CD4-positive, alpha-beta T cell (primary cell): ENCODE measurements at regions of chr11 and their contacts with region 1.

Region 1: GRCh38 chr11:57456960-57457642 is 3.2 kb upstream of the RTN4RL2 start:
- DNase-seq: peak; percentile 50 to 85 (median 66)
- ATAC-seq: peak; percentile 62
- H3K4me3 ChIP-seq: no peak overlapping the region
- H3K4me3 Mint-ChIP-seq: peak overlapping the region; percentile 83
- H3K27ac ChIP-seq: no peak overlapping the region
- H3K27ac Mint-ChIP-seq: no peak overlapping the region
- H3K4me1 ChIP-seq: peaks cover 42% of the 10 kb centered on the region
- H3K4me1 Mint-ChIP-seq: peaks cover 32% of the 10 kb centered on the region
- H3K27me3 ChIP-seq: peaks cover 33 to 36% of the 10 kb centered on the region in 2 experiments
- H3K27me3 Mint-ChIP-seq: peaks cover 51% of the 10 kb centered on the region
- CTCF ChIP-seq: peak; percentile 98

Region 2: DNA sequence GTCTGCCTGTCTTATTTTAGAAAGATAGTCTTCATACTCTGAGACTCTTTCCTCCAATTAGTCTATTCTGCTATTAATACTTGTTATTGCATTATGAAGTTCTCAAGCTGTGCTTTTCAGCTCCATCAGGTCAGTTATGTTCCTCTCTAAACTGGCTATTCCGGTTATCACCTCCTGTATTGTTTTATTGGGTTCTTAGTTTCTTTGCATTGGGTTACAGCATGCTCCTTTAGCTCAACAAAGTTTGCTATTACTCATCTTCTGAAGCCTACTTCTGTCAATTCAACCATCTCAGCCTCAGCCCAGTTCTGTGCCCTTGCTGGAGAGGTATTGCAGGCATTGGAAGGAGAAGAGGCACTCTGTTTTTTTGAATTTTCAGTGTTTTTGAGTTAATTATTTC is 489.4 kb before region 1 on chr11:
- CTCF ChIA-PET with region 1: no interaction called
- POLR2A ChIA-PET with region 1: no interaction called
- intact Hi-C with region 1: no loop called
- DNase-seq: no peak
- ATAC-seq: no peak
- H3K4me3 ChIP-seq: no peak overlapping the region
- H3K4me3 Mint-ChIP-seq: no peak overlapping the region
- H3K27ac ChIP-seq: no peak overlapping the region
- H3K27ac Mint-ChIP-seq: no peak overlapping the region
- H3K4me1 ChIP-seq: no peaks in the 10 kb centered on the region
- H3K4me1 Mint-ChIP-seq: no peaks in the 10 kb centered on the region
- H3K27me3 ChIP-seq: no peaks in the 10 kb centered on the region
- H3K27me3 Mint-ChIP-seq: peaks cover 5% of the 10 kb centered on the region
- CTCF ChIP-seq: no peak

Region 3: GRCh38 chr11:57116654-57117053 is 340.4 kb before region 1 on chr11:
- CTCF ChIA-PET with region 1: no interaction called
- POLR2A ChIA-PET with region 1: no interaction called
- intact Hi-C with region 1: no loop called
- DNase-seq: peak in 3 of 14 experiments; percentile 2 to 8 (median 7)
- ATAC-seq: no peak
- H3K4me3 ChIP-seq: no peak overlapping the region
- H3K4me3 Mint-ChIP-seq: no peak overlapping the region
- H3K27ac ChIP-seq: no peak overlapping the region
- H3K27ac Mint-ChIP-seq: no peak overlapping the region
- H3K4me1 ChIP-seq: no peaks in the 10 kb centered on the region
- H3K4me1 Mint-ChIP-seq: no peaks in the 10 kb centered on the region
- H3K27me3 ChIP-seq: peaks cover 4 to 9% of the 10 kb centered on the region in 2 experiments
- H3K27me3 Mint-ChIP-seq: peaks cover 7% of the 10 kb centered on the region
- CTCF ChIP-seq: no peak

Region 4: GRCh38 chr11:57426929-57427726 is 30.0 kb before region 1 on chr11 and contains the start of gene SLC43A3:
- CTCF ChIA-PET with region 1: interaction called, 15 read pairs
- POLR2A ChIA-PET with region 1: interaction called, 16 read pairs
- intact Hi-C with region 1: loop called (anchors 2 kb)
- DNase-seq: peak; percentile 17 to 79 (median 56)
- ATAC-seq: peak; percentile 21
- H3K4me3 ChIP-seq: peak within 1 kb of the TSS; percentile 61
- H3K4me3 Mint-ChIP-seq: peak within 1 kb of the TSS; percentile 87
- H3K27ac ChIP-seq: peak within 1 kb of the TSS; percentile 32 to 58
- H3K27ac Mint-ChIP-seq: peak within 1 kb of the TSS; percentile 87
- H3K4me1 ChIP-seq: peaks cover 39% of the 10 kb centered on the region
- H3K4me1 Mint-ChIP-seq: peaks cover 55% of the 10 kb centered on the region
- H3K27me3 ChIP-seq: no peaks in the 10 kb centered on the region
- H3K27me3 Mint-ChIP-seq: no peaks in the 10 kb centered on the region
- CTCF ChIP-seq: no peak
- total RNA-seq, gene SLC43A3: 6.9 to 7.3 TPM

Region 5: DNA sequence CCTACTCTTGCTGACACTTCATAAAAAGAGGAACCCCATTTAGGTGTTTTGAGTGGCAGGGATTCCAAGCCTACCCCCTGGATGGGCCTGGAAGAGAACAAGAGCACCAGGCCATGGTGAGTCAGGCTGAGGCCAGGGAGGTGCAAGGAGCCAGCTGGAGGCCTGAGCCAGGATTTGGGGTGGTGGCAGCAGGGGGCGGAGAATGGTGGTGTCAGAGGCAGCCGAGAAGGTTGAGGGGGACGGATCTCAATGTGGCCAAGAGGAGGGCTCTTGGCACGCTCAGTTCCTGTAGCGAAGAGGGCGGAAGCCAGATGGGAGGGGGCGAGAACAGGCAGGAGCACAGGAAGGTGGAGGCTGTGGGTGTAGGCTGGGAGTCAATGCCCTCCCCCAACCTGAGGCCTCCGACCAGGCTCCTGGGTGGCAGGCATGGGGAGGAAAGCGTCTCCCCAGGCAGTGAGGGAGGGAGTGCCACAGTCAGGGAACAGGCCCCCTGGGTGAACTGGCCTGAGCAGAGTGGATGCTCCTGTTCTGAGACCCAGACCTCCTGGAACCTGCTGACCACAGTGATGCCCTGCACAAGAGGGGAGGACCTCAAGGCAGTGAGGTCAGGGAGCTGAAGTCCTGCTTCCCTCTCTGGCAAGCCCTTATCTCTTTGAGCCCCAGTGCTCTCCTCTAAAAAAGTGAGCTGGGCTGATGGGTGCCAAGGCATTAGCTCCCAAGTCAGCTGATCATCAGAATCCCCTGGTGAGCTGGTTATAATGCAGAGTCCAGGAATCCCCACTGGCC is 17.1 kb after region 1 on chr11:
- CTCF ChIA-PET with region 1: interaction called, 7 read pairs
- POLR2A ChIA-PET with region 1: interaction called, 10 read pairs
- intact Hi-C with region 1: loop called in 1 of 2 experiments (anchors 2 kb)
- DNase-seq: peak in 7 of 14 experiments; percentile 42 to 65 (median 58)
- ATAC-seq: peak; percentile 69
- H3K4me3 ChIP-seq: no peak overlapping the region
- H3K4me3 Mint-ChIP-seq: peak overlapping the region; percentile 80
- H3K27ac ChIP-seq: no peak overlapping the region
- H3K27ac Mint-ChIP-seq: peak overlapping the region; percentile 21
- H3K4me1 ChIP-seq: peaks cover 36% of the 10 kb centered on the region
- H3K4me1 Mint-ChIP-seq: peaks cover 33% of the 10 kb centered on the region
- H3K27me3 ChIP-seq: peaks cover 0 to 4% of the 10 kb centered on the region in 2 experiments
- H3K27me3 Mint-ChIP-seq: no peaks in the 10 kb centered on the region
- CTCF ChIP-seq: no peak

Region 6: DNA sequence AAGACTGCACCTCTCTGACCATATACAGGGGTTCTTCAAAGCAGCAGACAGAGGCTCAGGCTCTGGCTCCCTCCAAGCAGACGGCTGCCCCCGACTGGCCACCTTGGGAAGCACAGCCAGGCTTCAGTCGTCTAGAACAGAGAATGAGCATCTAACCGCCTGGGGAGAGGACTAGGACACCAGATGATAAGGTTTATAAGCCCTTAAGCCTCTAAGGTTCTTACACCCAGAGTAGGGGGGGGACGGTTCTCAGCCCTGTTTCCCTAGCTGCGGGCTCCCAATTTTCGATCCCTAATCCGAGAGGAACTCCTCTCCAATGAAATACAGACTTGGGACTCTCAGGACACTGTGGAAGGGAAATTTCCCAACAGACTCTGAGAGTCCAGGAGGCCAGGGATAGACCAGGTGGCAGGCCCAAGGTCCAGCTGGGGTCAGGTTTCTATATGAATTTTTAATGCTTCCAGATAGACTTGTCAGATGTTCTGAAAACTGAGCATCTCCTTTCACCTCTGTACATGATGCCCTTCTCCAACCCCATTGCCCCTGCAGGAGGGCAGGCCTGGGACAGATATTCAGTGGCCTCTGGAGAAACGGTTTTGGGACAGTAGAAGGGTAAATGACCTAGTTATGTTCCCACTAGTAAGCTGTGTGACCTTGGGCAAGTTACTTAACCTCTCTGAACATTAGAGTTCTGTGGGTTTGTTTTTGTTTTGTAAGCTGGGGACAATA is 23.5 kb after region 1 on chr11:
- CTCF ChIA-PET with region 1: interaction called, 24 read pairs
- POLR2A ChIA-PET with region 1: interaction called, 10 read pairs
- intact Hi-C with region 1: loop called (anchors 1 to 2 kb)
- DNase-seq: peak; percentile 45 to 74 (median 58)
- ATAC-seq: peak; percentile 55
- H3K4me3 ChIP-seq: no peak overlapping the region
- H3K4me3 Mint-ChIP-seq: no peak overlapping the region
- H3K27ac ChIP-seq: no peak overlapping the region
- H3K27ac Mint-ChIP-seq: no peak overlapping the region
- H3K4me1 ChIP-seq: peaks cover 27% of the 10 kb centered on the region
- H3K4me1 Mint-ChIP-seq: peaks cover 18% of the 10 kb centered on the region
- H3K27me3 ChIP-seq: peaks cover 20% of the 10 kb centered on the region in 2 experiments
- H3K27me3 Mint-ChIP-seq: peaks cover 16% of the 10 kb centered on the region
- CTCF ChIP-seq: peak; percentile 56

Region 7: GRCh38 chr11:57493507-57494503 is 36.7 kb after region 1 on chr11:
- CTCF ChIA-PET with region 1: interaction called, 17 read pairs
- POLR2A ChIA-PET with region 1: no interaction called
- intact Hi-C with region 1: no loop called
- DNase-seq: peak; percentile 63 to 84 (median 69)
- ATAC-seq: peak; percentile 94
- H3K4me3 ChIP-seq: no peak overlapping the region
- H3K4me3 Mint-ChIP-seq: no peak overlapping the region
- H3K27ac ChIP-seq: no peak overlapping the region
- H3K27ac Mint-ChIP-seq: no peak overlapping the region
- H3K4me1 ChIP-seq: peaks cover 4% of the 10 kb centered on the region
- H3K4me1 Mint-ChIP-seq: no peaks in the 10 kb centered on the region
- H3K27me3 ChIP-seq: no peaks in the 10 kb centered on the region
- H3K27me3 Mint-ChIP-seq: no peaks in the 10 kb centered on the region
- CTCF ChIP-seq: peak; percentile 97

Region 8: DNA sequence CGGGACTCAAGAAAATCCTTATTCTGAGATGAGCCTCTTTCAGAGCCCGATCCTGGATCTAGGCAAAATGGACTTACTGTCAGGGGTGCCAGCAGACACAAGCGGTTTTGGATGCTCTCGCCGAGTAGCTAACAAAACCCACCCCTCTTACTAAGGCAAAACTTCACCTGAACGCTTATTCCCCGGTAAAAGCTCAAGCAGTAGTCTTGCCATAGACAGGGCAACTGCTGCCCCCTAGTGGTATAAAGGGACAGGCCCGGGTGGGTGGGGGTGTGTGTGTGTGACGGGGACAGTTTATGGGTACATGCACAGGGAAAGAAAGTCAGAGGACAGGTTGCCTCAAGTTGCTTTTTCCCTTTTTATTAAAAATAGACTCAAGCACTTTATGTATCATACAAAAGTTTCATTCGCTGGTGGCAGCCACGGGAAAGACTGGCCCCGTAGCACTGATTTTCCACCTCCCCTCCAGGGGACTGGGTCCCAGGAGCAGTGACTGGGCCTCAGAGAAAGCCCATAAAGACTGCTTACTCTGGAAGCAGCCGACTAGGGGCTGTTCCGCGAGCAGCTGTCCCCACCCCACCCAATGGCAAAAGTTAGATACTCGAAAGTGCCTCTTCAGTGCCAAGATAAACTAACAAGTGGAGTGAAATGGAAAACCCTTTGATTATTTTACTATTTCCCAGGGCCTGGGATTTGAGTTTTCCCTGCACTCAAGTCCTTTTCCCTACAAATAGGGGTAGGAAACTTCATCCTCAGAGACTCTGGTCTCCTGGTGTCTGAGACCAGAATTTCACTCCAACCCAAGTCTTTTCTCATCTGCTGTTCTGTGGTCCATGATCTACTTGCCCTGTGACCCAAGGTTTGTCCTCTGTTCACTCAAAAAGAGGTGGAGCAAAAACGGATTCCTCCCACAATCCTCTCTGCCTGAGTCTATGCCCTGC is 187.9 kb after region 1 on chr11:
- CTCF ChIA-PET with region 1: interaction called, 7 read pairs
- POLR2A ChIA-PET with region 1: interaction called, 3 read pairs
- intact Hi-C with region 1: loop called in 1 of 2 experiments (anchors 2 kb)
- DNase-seq: peak; percentile 73 to 90 (median 86)
- ATAC-seq: peak; percentile 68
- H3K4me3 ChIP-seq: no peak overlapping the region
- H3K4me3 Mint-ChIP-seq: no peak overlapping the region
- H3K27ac ChIP-seq: no peak overlapping the region
- H3K27ac Mint-ChIP-seq: no peak overlapping the region
- H3K4me1 ChIP-seq: peaks cover 42% of the 10 kb centered on the region
- H3K4me1 Mint-ChIP-seq: peaks cover 50% of the 10 kb centered on the region
- H3K27me3 ChIP-seq: peaks cover 48 to 50% of the 10 kb centered on the region in 2 experiments
- H3K27me3 Mint-ChIP-seq: peaks cover 64% of the 10 kb centered on the region
- CTCF ChIP-seq: peak; percentile 71

Region 9: DNA sequence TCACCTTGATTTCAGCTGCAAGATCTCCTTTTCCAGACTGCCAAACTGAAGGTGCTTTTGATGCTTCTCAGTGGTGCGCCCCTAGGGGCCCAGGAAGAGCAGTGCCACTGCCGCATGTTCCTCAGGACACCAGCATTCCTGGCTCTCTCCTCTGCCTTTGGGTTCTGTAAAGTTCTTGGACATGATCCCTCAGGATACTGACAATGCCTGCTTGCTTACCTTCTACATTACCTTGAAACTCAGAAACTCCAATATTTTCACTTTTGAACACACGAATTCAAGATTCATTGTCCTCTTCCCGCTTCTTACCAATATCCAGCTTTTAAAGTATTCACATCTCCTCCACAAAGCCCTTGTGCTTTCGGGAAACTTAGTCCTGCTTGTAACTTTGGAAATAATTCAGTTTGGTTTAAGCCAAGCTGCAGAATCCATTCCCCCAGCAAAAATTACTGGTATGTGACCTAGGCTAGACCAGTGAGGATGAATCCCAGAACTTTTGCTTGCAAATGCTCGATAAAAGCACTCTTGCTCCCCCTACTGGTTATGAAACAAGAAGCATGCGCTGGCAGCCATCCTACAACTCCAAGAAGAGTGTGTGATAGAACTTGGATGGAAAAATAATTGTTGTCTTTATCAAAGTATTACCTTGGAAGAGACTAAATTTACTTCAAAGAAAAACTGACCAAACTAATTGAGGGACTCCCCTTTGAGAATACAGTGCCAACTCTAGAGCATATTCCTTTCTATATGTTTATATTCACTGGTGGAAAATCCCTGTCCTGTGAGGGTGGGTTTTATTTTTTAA is 1067.3 kb after region 1 on chr11:
- CTCF ChIA-PET with region 1: no interaction called
- POLR2A ChIA-PET with region 1: interaction called, 4 read pairs
- intact Hi-C with region 1: loop called in 1 of 2 experiments (anchors 10 kb)
- DNase-seq: peak in 13 of 14 experiments; percentile 16 to 84 (median 35)
- ATAC-seq: peak; percentile 65
- H3K4me3 ChIP-seq: peak overlapping the region; percentile 39
- H3K4me3 Mint-ChIP-seq: peak overlapping the region; percentile 63
- H3K27ac ChIP-seq: peak overlapping the region; percentile 50 to 83
- H3K27ac Mint-ChIP-seq: peak overlapping the region; percentile 95
- H3K4me1 ChIP-seq: peaks cover 17% of the 10 kb centered on the region
- H3K4me1 Mint-ChIP-seq: peaks cover 78% of the 10 kb centered on the region
- H3K27me3 ChIP-seq: no peaks in the 10 kb centered on the region
- H3K27me3 Mint-ChIP-seq: no peaks in the 10 kb centered on the region
- CTCF ChIP-seq: peak; percentile 93